ENCODE measurements at regions of chr2 and their contacts with region 1.

Region 1: GRCh38 chr2:223993621-223994232 is 36.5 kb downstream of the MRPL44 start:
- DNase-seq: no peak
- H3K4me3 ChIP-seq: no peak overlapping the region
- H3K27me3 ChIP-seq: no peaks in the 10 kb centered on the region
- CTCF ChIP-seq: peak; percentile 79

Region 2: GRCh38 chr2:223979730-223980396 is 13.9 kb before region 1 on chr2:
- CTCF ChIA-PET with region 1: interaction called, 41 read pairs
- POLR2A ChIA-PET with region 1: no interaction called
- DNase-seq: no peak
- H3K4me3 ChIP-seq: no peak overlapping the region
- H3K27me3 ChIP-seq: no peaks in the 10 kb centered on the region
- CTCF ChIP-seq: no peak

Region 3: DNA sequence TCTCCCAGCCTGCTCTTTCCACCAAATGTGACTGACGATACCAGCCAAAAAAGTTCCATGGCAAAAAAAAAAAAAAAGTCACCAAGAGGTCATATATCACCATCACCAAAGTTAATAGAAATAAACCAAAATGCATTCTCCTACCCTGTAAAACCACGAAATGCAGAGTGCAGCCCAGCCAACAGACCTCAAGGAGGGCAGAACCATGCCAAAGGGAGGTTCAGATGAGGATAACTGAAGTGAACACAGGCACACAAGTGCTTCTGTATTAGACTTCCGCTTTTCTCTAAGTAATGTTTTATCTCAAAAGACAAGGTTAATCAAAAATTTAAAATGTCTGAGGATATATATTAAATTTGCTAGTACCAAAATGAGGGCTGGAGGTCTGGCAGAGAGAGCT is 39.9 kb after region 1 on chr2:
- CTCF ChIA-PET with region 1: interaction called, 10 read pairs
- POLR2A ChIA-PET with region 1: interaction called, 19 read pairs
- DNase-seq: no peak
- H3K4me3 ChIP-seq: no peak overlapping the region
- H3K27me3 ChIP-seq: no peaks in the 10 kb centered on the region
- CTCF ChIP-seq: no peak

Region 4: DNA sequence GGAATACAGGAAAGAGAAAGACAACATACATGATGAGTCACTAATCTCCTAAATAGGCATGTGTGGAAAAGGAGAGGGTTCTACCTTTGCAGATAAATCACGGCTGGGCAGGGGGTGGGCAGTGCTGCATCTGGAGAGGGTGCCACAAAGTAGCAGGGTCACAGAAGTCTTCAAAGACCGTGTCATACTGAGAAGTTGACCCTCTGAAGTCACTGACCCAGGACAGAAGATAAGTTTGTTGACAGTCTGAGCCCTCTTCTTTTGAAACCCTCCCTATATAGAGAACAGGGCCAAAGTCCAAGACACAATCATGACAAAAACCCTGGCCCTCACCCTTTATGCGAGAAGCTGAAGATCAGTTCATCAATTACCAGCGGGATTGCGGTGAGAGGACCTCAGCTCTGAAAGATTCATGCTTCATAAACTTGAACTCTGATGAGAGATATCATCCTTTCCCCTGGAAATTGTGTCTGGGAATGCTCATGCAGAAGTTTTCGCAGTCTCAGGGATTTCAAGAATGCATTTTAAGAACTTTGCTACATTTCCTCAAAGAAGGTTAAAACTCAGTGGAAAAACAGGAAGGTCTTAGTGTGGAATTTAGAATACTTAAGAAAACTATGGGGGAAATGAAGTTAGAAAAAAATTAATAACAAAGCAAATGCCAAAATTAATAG is 278.6 kb after region 1 on chr2:
- CTCF ChIA-PET with region 1: interaction called, 17 read pairs
- POLR2A ChIA-PET with region 1: no interaction called
- DNase-seq: no peak
- H3K4me3 ChIP-seq: no peak overlapping the region
- H3K27me3 ChIP-seq: no peaks in the 10 kb centered on the region
- CTCF ChIP-seq: no peak

Measured in BJ (cell line).